B cell (primary cell): ENCODE measurements at regions of chr10 and their contacts with region 1.

Region 1: GRCh38 chr10:109773288-109774120 is 149.8 kb downstream of the XPNPEP1 start:
- DNase-seq: no peak
- ATAC-seq: no peak
- H3K4me3 ChIP-seq: no peak overlapping the region
- H3K4me3 Mint-ChIP-seq: no peak overlapping the region
- H3K27ac ChIP-seq: no peak overlapping the region
- H3K27ac Mint-ChIP-seq: no peak overlapping the region
- H3K4me1 ChIP-seq: no peaks in the 10 kb centered on the region
- H3K4me1 Mint-ChIP-seq: no peaks in the 10 kb centered on the region
- H3K27me3 ChIP-seq: no peaks in the 10 kb centered on the region
- H3K27me3 Mint-ChIP-seq: peaks cover 12% of the 10 kb centered on the region
- CTCF ChIP-seq: peak; percentile 35

Region 2: GRCh38 chr10:109275960-109276359 is 497.5 kb before region 1 on chr10:
- CTCF ChIA-PET with region 1: no interaction called
- POLR2A ChIA-PET with region 1: no interaction called
- intact Hi-C with region 1: no loop called
- DNase-seq: no peak
- ATAC-seq: no peak
- H3K4me3 ChIP-seq: no peak overlapping the region
- H3K4me3 Mint-ChIP-seq: no peak overlapping the region
- H3K27ac ChIP-seq: no peak overlapping the region
- H3K27ac Mint-ChIP-seq: no peak overlapping the region
- H3K4me1 ChIP-seq: no peaks in the 10 kb centered on the region
- H3K4me1 Mint-ChIP-seq: no peaks in the 10 kb centered on the region
- H3K27me3 ChIP-seq: no peaks in the 10 kb centered on the region
- H3K27me3 Mint-ChIP-seq: no peaks in the 10 kb centered on the region
- CTCF ChIP-seq: no peak

Region 3: GRCh38 chr10:109784236-109784635 is 10.7 kb after region 1 on chr10:
- CTCF ChIA-PET with region 1: interaction called, 11 read pairs
- POLR2A ChIA-PET with region 1: no interaction called
- intact Hi-C with region 1: no loop called
- DNase-seq: no peak
- ATAC-seq: no peak
- H3K4me3 ChIP-seq: no peak overlapping the region
- H3K4me3 Mint-ChIP-seq: no peak overlapping the region
- H3K27ac ChIP-seq: no peak overlapping the region
- H3K27ac Mint-ChIP-seq: no peak overlapping the region
- H3K4me1 ChIP-seq: no peaks in the 10 kb centered on the region
- H3K4me1 Mint-ChIP-seq: no peaks in the 10 kb centered on the region
- H3K27me3 ChIP-seq: peaks cover 0 to 2% (median 0%) of the 10 kb centered on the region in 4 experiments
- H3K27me3 Mint-ChIP-seq: peaks cover 6% of the 10 kb centered on the region
- CTCF ChIP-seq: no peak